ENCODE measurements at regions of chr15 and their contacts with region 1.

Region 1: GRCh38 chr15:68875377-68876116 is 54.8 kb upstream of the SPESP1 start:
- DNase-seq: peak; percentile 98
- H3K4me3 ChIP-seq: peak overlapping the region; percentile 39 to 57 (median 42)
- H3K27ac ChIP-seq: no peak overlapping the region
- H3K4me1 ChIP-seq: peaks cover 5 to 11% (median 10%) of the 10 kb centered on the region in 4 donors
- H3K27me3 ChIP-seq: peaks cover 0 to 22% (median 0%) of the 10 kb centered on the region in 4 donors
- CTCF ChIP-seq: peak; percentile 84 to 92 (median 88)
- EP300 ChIP-seq: no peak
- POLR2A ChIP-seq: no peak

Region 2: DNA sequence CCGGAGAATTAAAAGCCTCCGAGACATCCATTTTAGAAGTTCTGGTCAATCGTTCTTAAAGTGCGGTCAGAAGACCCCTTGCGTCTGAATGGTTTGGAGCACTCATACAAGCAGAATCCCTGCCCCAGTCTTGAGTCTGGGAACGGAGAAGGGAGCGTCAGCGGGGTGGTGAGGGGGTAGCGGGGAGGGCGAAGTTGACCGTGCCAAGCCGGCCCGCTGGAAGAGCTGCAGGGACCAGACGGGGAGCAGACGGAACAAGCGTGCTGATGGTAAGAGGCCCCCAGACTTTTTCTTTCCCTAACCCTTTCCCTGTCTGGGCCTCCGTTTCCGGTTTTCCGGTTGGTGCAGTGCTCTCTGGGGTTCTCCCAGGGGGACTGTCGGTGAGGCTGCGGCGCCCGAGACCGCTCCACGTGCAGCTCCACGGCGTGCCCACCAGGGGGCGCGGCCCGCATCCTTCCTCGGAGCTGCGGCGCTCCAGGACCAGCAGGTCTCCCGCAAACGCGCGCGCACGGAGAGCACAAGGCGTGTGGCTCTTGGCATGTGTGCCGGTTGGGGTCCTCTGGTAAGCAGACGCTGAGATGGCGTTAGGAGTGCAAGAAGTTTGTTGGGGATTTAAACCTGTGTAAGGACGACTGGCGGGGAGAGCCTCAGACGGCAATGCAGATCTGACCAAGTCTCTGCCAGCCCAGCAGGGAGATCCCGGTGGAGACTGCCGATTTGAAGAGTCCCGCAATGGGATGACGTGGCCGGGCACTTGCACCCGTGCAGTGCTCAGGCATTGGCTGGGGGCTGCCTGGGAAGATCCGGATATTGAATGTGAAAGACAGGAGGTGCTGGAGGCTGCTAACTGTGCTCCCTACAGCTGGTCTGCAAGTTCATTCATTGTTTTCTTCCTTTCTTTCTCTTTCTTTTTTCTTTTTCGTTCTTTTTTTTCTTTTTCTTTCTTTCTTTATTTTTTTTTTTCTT is 315.9 kb before region 1 on chr15:
- intact Hi-C with region 1: loop called (anchors 2 kb)
- DNase-seq: no peak
- H3K4me3 ChIP-seq: peak overlapping the region; percentile 45 to 60 (median 48)
- H3K27ac ChIP-seq: no peak overlapping the region
- H3K4me1 ChIP-seq: peaks cover 9 to 17% (median 15%) of the 10 kb centered on the region in 4 donors
- H3K27me3 ChIP-seq: peaks cover 0 to 58% (median 4%) of the 10 kb centered on the region in 4 donors
- CTCF ChIP-seq: peak; percentile 92 to 99 (median 97)
- EP300 ChIP-seq: no peak
- POLR2A ChIP-seq: no peak

Region 3: DNA sequence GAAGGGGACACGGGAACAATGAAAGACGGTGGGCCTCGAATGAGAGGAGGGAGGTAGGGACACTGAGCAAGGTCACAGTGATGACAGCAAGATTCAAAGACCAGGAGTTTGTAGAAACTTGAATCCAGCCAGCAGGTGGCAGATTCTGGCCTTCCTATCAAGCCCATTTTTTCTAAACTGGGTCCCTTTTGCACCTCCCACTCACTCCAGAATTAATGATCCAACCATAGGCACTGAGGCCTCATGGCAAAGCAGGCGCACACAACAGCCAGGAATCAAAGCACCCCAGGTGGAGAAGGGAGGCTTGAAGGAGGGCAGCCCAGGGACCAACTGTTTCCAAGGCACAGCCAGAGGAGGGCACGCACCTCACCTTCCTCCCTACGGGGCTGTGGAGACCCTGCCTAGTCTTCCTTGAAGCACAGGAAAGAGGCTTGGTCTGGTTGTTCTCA is 145.1 kb before region 1 on chr15:
- intact Hi-C with region 1: loop called (anchors 2 kb)
- DNase-seq: no peak
- H3K4me3 ChIP-seq: no peak overlapping the region
- H3K27ac ChIP-seq: peak overlapping the region; percentile 30 to 72 (median 65)
- H3K4me1 ChIP-seq: peaks cover 29 to 50% (median 42%) of the 10 kb centered on the region in 4 donors
- H3K27me3 ChIP-seq: no peaks in the 10 kb centered on the region
- CTCF ChIP-seq: peak; percentile 42 to 56 (median 55)
- EP300 ChIP-seq: no peak
- POLR2A ChIP-seq: no peak

Region 4: GRCh38 chr15:68783226-68784058 is 92.1 kb before region 1 on chr15:
- intact Hi-C with region 1: loop called (anchors 2 kb)
- DNase-seq: no peak
- H3K4me3 ChIP-seq: no peak overlapping the region
- H3K27ac ChIP-seq: no peak overlapping the region
- H3K4me1 ChIP-seq: peaks cover 0 to 18% (median 10%) of the 10 kb centered on the region in 4 donors
- H3K27me3 ChIP-seq: no peaks in the 10 kb centered on the region
- CTCF ChIP-seq: peak; percentile 60 to 73 (median 72)
- EP300 ChIP-seq: no peak
- POLR2A ChIP-seq: no peak

Region 5: DNA sequence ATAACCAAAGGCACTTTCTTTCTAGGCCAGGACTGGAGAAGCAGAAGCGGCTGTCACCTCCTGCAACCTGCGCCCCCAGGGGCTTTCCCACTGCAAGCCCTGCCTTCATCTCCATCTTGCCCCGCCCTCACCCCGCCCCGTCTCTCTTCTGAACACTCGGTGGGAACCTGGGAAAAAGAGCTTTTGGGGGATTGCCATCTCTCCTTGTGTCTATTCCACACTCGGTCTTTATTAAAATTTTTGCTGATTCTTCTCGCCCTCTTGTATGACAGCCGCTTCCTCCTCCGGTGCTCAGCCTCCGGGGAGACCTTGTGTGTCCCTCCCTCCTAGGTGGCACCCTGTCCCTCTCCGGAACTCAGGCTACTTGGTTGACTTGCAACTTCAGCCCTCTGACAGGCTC is 12.9 kb after region 1 on chr15:
- intact Hi-C with region 1: no loop called
- DNase-seq: peak; percentile 68
- H3K4me3 ChIP-seq: no peak overlapping the region
- H3K27ac ChIP-seq: no peak overlapping the region
- H3K4me1 ChIP-seq: peaks cover 7 to 15% (median 11%) of the 10 kb centered on the region in 4 donors
- H3K27me3 ChIP-seq: peaks cover 0 to 5% (median 0%) of the 10 kb centered on the region in 4 donors
- CTCF ChIP-seq: no peak
- EP300 ChIP-seq: no peak
- POLR2A ChIP-seq: no peak

Region 6: GRCh38 chr15:69093127-69094013 is 217.8 kb after region 1 on chr15:
- intact Hi-C with region 1: no loop called
- DNase-seq: no peak
- H3K4me3 ChIP-seq: no peak overlapping the region
- H3K27ac ChIP-seq: no peak overlapping the region
- H3K4me1 ChIP-seq: peaks cover 0 to 10% (median 2%) of the 10 kb centered on the region in 4 donors
- H3K27me3 ChIP-seq: peaks cover 0 to 10% (median 0%) of the 10 kb centered on the region in 4 donors
- CTCF ChIP-seq: no peak
- EP300 ChIP-seq: no peak
- POLR2A ChIP-seq: no peak

Measured in esophagus muscularis mucosa (tissue), 4 donors.